ENCODE measurements at regions of chr9 and their contacts with region 1.

Region 1: DNA sequence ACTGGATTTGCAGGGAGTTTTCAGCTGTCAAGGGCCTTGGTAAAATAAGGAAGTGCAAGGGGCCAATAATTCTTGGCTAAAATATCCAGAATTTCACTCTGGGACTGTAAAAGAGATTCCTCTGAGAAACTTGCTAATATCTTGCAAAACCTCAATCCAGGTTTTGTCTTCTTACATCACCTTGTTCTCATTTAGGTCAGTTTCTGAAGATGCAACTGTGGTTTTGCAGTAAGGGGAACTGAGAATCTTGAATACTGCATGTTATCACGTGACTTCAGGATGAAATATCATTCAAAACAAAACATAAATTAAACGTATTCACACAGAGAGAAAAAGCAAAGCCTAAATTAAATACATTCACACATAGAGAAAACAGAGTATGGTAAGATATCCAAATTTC is 35.0 kb upstream of the RIC1 start:
- DNase-seq: no peak
- H3K4me3 ChIP-seq: no peak overlapping the region
- H3K27ac ChIP-seq: no peak overlapping the region
- H3K4me1 ChIP-seq: no peaks in the 10 kb centered on the region
- H3K27me3 ChIP-seq: no peaks in the 10 kb centered on the region
- CTCF ChIP-seq: no peak

Region 2: DNA sequence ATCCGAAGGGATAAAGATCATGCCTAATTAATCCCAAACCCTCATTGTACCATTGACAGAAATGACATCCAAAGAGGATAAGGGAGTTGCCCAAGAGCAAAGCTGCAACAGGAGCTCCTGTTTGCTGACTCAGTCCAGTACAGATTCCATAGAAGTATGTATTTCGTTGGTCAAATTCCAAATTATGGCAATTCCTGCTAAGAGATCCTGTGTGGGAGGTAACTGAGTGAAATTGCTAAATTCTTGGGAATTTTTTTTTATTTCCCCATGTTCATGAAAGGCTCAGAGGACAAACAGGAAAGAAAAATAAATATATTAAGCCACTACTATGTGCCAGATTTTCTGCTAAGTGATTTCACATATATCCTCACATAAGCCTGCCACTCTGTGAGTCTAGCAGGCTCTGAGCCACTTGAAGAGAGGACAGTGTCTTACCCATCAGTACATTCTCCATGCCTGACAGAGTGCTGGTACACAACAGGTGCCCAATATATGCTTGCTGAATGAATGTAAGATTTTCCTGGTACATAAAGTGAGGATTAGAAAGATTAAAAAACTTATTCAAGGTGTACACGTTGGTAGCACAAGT is 1426.7 kb before region 1 on chr9:
- CTCF ChIA-PET with region 1: no interaction called
- POLR2A ChIA-PET with region 1: interaction called, 34 read pairs
- intact Hi-C with region 1: no loop called
- DNase-seq: no peak
- H3K4me3 ChIP-seq: no peak overlapping the region
- H3K27ac ChIP-seq: no peak overlapping the region
- H3K4me1 ChIP-seq: no peaks in the 10 kb centered on the region
- H3K27me3 ChIP-seq: no peaks in the 10 kb centered on the region
- CTCF ChIP-seq: no peak

Measured in PC-9 (cell line).